T-cell (primary cell): ENCODE measurements at regions of chr3 and their contacts with region 1.

Region 1: GRCh38 chr3:47250309-47251060 is 32.1 kb downstream of the KIF9 start:
- DNase-seq: no peak
- ATAC-seq: no peak
- H3K4me3 ChIP-seq: no peak overlapping the region
- H3K4me3 Mint-ChIP-seq: no peak overlapping the region
- H3K27ac ChIP-seq: no peak overlapping the region
- H3K27ac Mint-ChIP-seq: no peak overlapping the region
- H3K4me1 ChIP-seq: no peaks in the 10 kb centered on the region
- H3K4me1 Mint-ChIP-seq: no peaks in the 10 kb centered on the region
- H3K27me3 ChIP-seq: peaks cover 0 to 2% of the 10 kb centered on the region in 2 experiments
- H3K27me3 Mint-ChIP-seq: peaks cover 0 to 1% of the 10 kb centered on the region in 2 donors

Region 2: DNA sequence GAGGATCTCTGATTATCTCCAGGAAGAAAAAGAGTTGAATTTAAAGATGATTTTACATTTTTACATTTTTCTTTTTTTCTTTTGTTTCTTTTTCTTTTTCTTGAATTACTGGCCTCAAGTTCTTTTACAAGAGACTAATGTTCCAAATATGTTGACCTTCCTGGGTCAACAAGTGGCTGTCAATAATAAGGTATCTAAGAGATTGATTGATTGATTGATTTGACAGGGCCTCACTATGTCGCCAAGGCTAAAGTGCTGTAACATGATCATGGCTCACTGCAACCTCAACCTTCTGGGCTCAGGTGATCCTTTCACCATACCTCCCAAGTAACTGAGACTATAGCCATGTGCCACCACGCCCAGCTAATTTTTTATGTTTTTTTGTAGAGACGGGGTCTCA is 12.5 kb before region 1 on chr3:
- CTCF ChIA-PET with region 1: no interaction called
- POLR2A ChIA-PET with region 1: interaction called in 1 of 2 experiments, 10 read pairs
- DNase-seq: no peak
- ATAC-seq: no peak
- H3K4me3 ChIP-seq: no peak overlapping the region
- H3K4me3 Mint-ChIP-seq: no peak overlapping the region
- H3K27ac ChIP-seq: no peak overlapping the region
- H3K27ac Mint-ChIP-seq: no peak overlapping the region
- H3K4me1 ChIP-seq: no peaks in the 10 kb centered on the region
- H3K4me1 Mint-ChIP-seq: no peaks in the 10 kb centered on the region
- H3K27me3 ChIP-seq: no peaks in the 10 kb centered on the region
- H3K27me3 Mint-ChIP-seq: no peaks in the 10 kb centered on the region